ENCODE measurements at regions of chr1 and their contacts with region 1.

Region 1: DNA sequence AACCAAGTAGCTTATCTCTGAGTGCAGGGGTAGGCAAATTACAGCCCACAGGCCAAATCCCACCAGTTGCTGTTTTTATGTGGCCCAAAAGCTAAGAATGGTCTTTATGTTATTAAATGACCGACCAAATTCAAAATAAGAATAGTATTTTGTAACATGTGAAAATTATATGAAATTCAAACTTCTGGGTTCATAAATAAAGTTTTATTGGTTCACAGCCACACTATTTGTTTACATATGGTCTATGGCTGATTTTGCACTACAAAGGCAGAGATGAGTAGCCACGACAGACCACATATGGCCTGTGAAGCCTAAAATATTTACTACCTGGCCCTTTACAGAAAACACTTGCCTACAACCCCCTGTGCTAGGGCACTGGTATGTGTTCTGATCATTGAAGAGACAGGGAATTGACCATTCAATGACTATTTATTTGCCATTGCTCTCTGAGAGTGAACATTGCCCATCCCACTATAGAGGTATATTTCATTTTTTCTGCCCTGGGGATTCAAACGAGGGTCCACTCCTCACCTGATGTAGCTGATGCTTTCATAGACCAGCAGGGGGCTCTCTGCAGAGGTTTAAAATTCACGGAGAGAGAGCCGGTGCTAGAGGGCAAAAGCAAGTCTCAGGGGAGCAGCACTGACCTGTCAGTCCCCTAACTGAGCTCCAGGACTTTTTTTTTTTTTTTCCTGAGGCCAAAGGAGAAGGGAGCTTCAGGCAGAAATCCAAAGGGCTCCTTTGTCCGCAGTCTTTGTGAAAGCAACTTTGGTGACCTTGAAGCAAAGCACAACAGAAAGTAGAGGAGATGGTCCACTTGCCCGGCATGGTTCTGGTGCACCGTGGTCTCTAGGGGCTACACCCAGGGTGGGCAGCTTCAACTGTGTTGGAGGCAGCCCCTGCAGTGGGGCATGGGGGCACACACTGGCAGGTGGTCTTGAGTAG is 7.3 kb upstream of the GNL2 start:
- DNase-seq: peak in 3 of 5 donors; percentile 12 to 43 (median 33)
- H3K4me3 ChIP-seq: no peak overlapping the region
- H3K4me3 Mint-ChIP-seq: no peak overlapping the region
- H3K27ac ChIP-seq: no peak overlapping the region
- H3K27ac Mint-ChIP-seq: peak overlapping the region in 1 of 8 donors; percentile 70
- H3K4me1 ChIP-seq: no peaks in the 10 kb centered on the region
- H3K4me1 Mint-ChIP-seq: peaks cover 0 to 4% (median 0%) of the 10 kb centered on the region in 3 donors
- H3K27me3 ChIP-seq: no peaks in the 10 kb centered on the region
- H3K27me3 Mint-ChIP-seq: peaks cover 10 to 16% of the 10 kb centered on the region in 2 donors

Region 2: GRCh38 chr1:37682334-37682987 is 79.4 kb after region 1 on chr1:
- CTCF ChIA-PET with region 1: interaction called, 115 read pairs
- POLR2A ChIA-PET with region 1: no interaction called
- DNase-seq: peak; percentile 60 to 81 (median 68)
- H3K4me3 ChIP-seq: no peak overlapping the region
- H3K4me3 Mint-ChIP-seq: no peak overlapping the region
- H3K27ac ChIP-seq: no peak overlapping the region
- H3K27ac Mint-ChIP-seq: peak overlapping the region; percentile 34 to 83 (median 68)
- H3K4me1 ChIP-seq: no peaks in the 10 kb centered on the region
- H3K4me1 Mint-ChIP-seq: peaks cover 0 to 4% (median 4%) of the 10 kb centered on the region in 3 donors
- H3K27me3 ChIP-seq: no peaks in the 10 kb centered on the region
- H3K27me3 Mint-ChIP-seq: no peaks in the 10 kb centered on the region